ENCODE measurements at regions of chr11 and their contacts with region 1.

Region 1: DNA sequence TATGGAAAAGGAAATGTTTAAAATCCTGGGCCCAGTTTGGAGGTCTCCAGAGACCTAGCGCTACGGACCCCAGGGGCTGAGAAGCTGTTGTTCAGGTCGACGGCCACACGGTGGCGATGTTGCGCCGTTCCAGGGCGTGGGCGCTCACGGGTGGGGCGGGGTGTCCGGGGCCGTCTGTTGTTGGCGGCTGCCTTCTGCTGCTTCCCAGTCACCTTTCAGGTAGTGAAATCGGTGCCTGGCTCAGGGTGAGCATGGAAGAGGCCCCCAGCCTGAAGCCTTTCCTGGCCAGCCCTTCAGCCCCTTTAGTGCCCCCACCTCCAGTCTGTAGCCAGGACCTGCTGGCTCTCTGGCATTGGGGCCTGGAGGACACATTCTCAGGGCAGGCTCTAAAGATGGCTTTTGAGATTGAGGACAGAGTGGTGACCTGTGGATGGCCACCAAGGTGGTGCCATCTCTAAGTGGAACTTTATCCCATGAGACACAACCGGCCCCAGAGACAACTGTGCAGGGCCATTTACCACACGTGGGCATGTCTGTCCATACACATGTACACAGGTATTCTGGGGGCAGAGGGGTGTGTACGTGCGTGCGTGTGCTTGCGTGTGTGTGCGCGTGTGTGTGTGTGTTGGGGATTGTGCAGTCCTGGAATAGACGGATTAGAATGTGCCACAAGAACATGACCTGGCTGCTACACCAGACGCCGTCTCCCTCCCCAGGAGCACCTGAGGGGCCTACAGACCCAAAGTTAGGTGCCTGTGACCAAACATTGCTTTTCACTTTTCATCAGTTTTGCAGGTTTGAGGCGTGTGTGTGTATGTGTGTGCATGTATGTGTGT is 53.8 kb downstream of the ST14 start:
- DNase-seq: peak; percentile 68
- H3K4me3 Mint-ChIP-seq: no peak overlapping the region
- H3K27ac Mint-ChIP-seq: no peak overlapping the region
- H3K4me1 Mint-ChIP-seq: no peaks in the 10 kb centered on the region
- H3K27me3 Mint-ChIP-seq: no peaks in the 10 kb centered on the region
- CTCF ChIP-seq: peak; percentile 87

Region 2: DNA sequence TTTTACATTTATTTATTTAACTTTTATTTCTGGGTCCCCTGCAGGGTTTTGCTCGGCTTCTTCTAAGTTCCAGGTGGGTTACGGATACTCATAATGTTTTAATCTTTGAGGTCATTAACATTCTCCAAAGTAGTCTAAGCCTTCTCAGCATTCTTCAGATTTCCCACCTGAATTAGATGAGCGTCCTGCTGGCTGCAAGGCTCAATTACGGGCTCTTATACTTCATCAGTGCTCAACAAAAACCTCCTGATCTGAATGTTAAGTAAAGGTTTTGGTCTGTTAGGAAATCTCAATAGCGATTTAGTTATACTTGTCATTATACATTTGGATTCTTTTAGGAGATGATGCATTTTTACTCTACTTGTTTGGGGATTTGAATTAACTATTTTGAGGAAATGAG is 290.7 kb before region 1 on chr11:
- CTCF ChIA-PET with region 1: no interaction called
- intact Hi-C with region 1: loop called (anchors 5 kb)
- DNase-seq: no peak
- H3K4me3 Mint-ChIP-seq: no peak overlapping the region
- H3K27ac Mint-ChIP-seq: no peak overlapping the region
- H3K4me1 Mint-ChIP-seq: peaks cover 8% of the 10 kb centered on the region
- H3K27me3 Mint-ChIP-seq: no peaks in the 10 kb centered on the region
- CTCF ChIP-seq: no peak

Region 3: GRCh38 chr11:130145975-130146776 is 67.2 kb before region 1 on chr11:
- CTCF ChIA-PET with region 1: no interaction called
- intact Hi-C with region 1: no loop called
- DNase-seq: peak; percentile 93
- H3K4me3 Mint-ChIP-seq: peak overlapping the region; percentile 60
- H3K27ac Mint-ChIP-seq: peak overlapping the region; percentile 98
- H3K4me1 Mint-ChIP-seq: peaks cover 25% of the 10 kb centered on the region
- H3K27me3 Mint-ChIP-seq: no peaks in the 10 kb centered on the region
- CTCF ChIP-seq: no peak

Region 4: DNA sequence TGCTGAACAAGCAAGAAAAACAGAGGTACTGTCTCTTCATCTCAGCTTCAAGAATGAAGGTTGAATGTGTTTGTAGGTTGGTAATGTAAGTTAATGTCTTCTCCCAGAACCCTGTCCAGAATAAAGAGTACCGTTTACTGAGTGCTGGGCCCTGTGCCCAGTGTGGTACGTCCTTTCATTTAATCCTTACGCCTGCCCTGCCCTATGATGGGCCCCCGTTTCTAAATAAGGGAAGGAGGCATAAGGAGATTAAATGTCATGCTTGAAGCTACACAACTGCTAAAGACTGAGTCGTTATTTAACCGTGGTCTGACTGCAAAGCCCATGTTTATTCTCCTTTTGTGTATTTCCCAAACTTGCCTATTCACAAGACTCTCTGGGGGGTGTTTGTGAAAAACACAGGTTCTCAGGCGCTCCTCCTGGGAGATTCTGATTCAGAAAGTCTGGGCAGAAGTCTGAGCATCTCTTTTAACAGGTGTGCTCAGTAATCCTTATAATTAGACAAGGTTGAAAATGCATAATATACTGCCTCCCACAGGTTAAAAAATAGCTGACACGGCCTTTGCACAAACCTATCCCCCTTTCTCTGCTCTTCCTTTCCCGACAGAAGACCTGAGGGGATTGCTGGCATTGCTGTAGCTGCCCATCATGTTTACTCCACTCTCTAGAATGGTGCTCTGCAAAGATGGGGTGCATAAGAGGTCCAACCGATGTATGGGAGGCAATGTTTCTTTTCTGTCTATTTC is 157.7 kb after region 1 on chr11:
- CTCF ChIA-PET with region 1: interaction called, 3 read pairs
- intact Hi-C with region 1: loop called (anchors 2 kb)
- DNase-seq: no peak
- H3K4me3 Mint-ChIP-seq: no peak overlapping the region
- H3K27ac Mint-ChIP-seq: no peak overlapping the region
- H3K4me1 Mint-ChIP-seq: no peaks in the 10 kb centered on the region
- H3K27me3 Mint-ChIP-seq: peaks cover 13% of the 10 kb centered on the region
- CTCF ChIP-seq: no peak

Region 5: DNA sequence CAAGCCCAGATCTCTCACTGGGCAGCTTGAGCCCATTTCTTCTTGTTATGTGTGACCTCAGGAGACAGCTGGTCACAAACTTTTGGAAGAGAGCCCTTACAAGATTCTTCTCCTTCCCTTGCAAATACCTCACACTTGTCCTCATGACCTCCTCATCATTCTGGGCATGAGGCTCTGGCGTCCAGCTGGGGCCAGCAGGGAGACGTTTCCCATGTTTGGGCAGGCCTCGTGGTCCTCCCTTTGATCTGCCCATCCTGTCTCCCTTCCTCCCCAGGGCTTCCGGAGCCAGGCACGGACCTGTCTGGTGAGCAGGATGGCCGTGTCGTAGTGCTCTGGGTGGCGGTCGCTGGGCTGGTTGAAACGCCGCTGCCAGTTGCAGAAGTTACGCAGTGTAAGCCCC is 205.4 kb after region 1 on chr11:
- CTCF ChIA-PET with region 1: no interaction called
- intact Hi-C with region 1: loop called (anchors 5 kb)
- DNase-seq: no peak
- H3K4me3 Mint-ChIP-seq: no peak overlapping the region
- H3K27ac Mint-ChIP-seq: no peak overlapping the region
- H3K4me1 Mint-ChIP-seq: no peaks in the 10 kb centered on the region
- H3K27me3 Mint-ChIP-seq: peaks cover 53% of the 10 kb centered on the region
- CTCF ChIP-seq: no peak

Region 6: GRCh38 chr11:130634961-130635473 is 421.7 kb after region 1 on chr11:
- CTCF ChIA-PET with region 1: no interaction called
- intact Hi-C with region 1: no loop called
- DNase-seq: no peak
- H3K4me3 Mint-ChIP-seq: no peak overlapping the region
- H3K27ac Mint-ChIP-seq: no peak overlapping the region
- H3K4me1 Mint-ChIP-seq: peaks cover 27% of the 10 kb centered on the region
- H3K27me3 Mint-ChIP-seq: no peaks in the 10 kb centered on the region
- CTCF ChIP-seq: no peak

Measured in Calu3 (cell line).